Activated CD4-positive, alpha-beta T cell treated with anti-CD3 and anti-CD28 coated beads, Interleukin-2, amount 10 ng/mL, durations not matched to agents 24 days and 14 days (primary cell): ENCODE measurements at regions of chr3 and their contacts with region 1.

Region 1: DNA sequence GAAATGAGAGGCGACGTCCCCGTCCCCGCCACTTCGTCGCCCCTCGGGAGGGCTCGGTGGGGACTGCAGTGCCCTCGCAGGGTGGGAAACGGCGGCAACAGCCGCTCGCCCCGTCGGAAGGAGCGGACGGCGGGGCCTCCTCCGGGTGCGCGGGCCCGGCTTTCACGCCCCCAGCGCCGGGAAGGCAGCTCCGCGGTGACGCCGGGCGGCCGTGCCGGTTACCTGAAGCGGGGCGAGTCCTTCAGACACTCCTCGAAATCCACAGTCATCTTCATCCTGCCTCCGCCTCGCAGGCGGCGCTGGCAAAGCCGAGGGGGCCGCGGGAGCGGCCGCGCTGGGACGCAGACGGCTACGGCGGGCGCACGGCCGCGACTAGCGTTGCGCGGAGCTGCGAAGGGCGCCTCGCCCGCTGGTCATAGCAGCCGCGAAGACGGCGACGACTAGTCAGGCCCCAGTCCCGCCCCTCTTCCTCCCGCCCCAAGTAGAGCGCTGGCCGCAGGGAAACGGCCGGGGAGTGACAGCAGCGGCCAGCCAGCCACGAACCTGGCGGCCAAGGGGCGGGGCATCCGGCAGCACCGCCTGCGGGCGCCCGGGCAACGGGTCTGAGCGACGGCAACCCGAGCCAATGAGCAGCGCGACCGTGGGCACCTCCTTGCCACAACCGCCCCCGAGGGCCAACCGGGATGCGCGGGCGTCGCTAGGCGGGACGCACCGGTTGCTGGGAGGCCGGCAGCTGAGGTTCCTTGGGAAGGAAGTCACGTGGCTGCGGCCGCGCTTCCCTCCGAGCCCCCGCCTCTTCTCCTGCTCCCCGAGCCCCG is at the start of gene ACAP2:
- DNase-seq: peak; percentile 100
- H3K4me3 Mint-ChIP-seq: peak within 1 kb of the TSS; percentile 97
- H3K27ac Mint-ChIP-seq: peak within 1 kb of the TSS; percentile 91
- H3K4me1 Mint-ChIP-seq: peaks cover 39% of the 10 kb centered on the region
- H3K27me3 Mint-ChIP-seq: no peaks in the 10 kb centered on the region
- total RNA-seq, gene ACAP2: 39.1 and 40.0 TPM in 2 replicates

Region 2: DNA sequence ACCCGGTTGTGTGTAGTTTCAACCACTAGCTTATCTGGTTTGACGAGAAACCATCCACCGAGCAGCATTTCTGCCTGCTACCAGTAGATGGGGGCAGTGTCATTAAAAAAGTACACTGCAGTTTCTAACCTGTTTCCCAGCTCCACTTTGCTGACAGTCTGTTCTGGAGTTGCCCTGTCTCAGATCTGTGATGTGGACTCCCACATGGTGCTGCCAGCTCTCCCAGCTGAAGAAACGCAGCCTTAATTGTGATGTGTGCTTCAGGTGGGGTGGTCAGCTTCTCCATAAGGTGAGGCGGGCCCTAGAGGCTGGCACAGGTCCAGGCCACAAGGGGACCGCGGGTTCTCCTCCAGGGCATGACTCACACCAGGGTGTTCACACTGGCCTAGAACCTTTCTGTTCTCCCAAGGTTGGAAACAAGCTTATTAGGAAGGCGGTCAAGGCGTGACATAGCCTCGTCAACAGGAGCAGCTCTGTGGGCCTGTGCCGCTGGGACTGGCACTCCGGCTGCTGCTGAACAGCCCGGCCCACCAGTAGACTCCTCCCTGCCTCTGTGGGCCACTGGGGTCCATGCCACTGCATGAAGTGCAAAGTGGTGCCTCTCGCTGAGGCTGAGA is 760.0 kb before region 1 on chr3:
- intact Hi-C with region 1: loop called (anchors 5 kb)
- DNase-seq: peak; percentile 91
- H3K4me3 Mint-ChIP-seq: no peak overlapping the region
- H3K27ac Mint-ChIP-seq: no peak overlapping the region
- H3K4me1 Mint-ChIP-seq: peaks cover 37% of the 10 kb centered on the region
- H3K27me3 Mint-ChIP-seq: peaks cover 34% of the 10 kb centered on the region

Region 3: DNA sequence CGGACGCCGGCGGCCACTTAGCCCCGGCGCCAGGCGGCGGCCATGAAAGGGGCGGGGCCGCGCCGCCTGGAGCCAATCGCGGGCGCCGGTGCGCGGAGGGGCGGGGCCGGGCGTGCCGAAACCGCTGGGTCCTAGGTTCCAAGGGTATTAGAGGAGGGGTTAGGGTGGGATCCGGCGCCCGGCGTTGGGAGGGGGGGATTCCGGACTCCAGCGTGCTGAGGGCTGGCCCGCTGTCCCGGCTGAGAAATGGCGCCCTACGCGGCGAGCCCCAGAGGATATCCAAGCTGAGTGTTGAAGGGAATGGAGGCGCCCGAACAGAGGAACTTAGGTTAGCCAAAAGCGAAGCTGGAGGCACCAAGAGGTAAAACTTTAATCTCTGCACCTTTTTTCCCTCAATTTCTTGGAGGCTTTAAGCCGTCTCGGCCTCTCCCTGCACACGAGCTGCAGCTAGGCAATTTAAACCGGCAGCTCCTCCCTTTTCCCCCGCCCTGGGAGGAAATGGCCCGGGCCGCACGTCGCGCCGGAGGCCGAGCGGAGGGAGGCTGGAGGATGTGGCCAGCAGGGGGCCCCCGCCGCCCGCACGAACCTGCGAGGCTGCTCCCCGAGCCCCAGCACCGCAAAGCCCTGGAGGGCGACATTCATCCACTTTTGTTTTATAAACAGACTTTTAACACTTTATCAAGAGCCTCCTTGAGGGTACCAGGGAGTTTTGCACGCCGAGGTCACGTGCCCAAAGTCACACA is 171.5 kb before region 1 on chr3 and contains the start of gene XXYLT1:
- intact Hi-C with region 1: loop called (anchors 1 kb)
- DNase-seq: peak; percentile 97
- H3K4me3 Mint-ChIP-seq: peak within 1 kb of the TSS; percentile 88
- H3K27ac Mint-ChIP-seq: peak within 1 kb of the TSS; percentile 90
- H3K4me1 Mint-ChIP-seq: peaks cover 17% of the 10 kb centered on the region
- H3K27me3 Mint-ChIP-seq: no peaks in the 10 kb centered on the region
- total RNA-seq, gene XXYLT1: 14.5 and 17.4 TPM in 2 replicates

Region 4: DNA sequence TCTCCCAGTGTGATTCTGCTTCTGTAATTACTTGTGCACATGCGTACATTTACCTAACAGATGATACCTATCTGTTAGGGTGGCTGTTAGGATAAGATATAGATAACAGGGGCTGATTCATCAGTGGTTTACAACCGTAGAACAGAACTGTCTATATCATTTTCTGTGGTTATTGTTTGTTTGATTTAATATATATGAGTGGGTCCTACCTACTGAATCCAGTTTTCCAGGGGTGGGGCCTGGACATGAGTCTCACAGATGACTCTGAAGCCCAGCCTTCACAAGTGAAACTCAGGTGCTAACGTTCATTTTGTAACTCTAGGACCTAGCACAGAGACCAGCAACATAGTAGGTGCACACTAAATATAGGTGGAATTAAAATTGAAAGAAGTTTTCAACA is 10.5 kb after region 1 on chr3:
- intact Hi-C with region 1: no loop called
- DNase-seq: no peak
- H3K4me3 Mint-ChIP-seq: no peak overlapping the region
- H3K27ac Mint-ChIP-seq: no peak overlapping the region
- H3K4me1 Mint-ChIP-seq: peaks cover 7% of the 10 kb centered on the region
- H3K27me3 Mint-ChIP-seq: peaks cover 7% of the 10 kb centered on the region

Region 5: GRCh38 chr3:195467641-195468390 is 25.0 kb after region 1 on chr3:
- intact Hi-C with region 1: loop called (anchors 1 kb)
- DNase-seq: peak; percentile 65
- H3K4me3 Mint-ChIP-seq: peak overlapping the region; percentile 3
- H3K27ac Mint-ChIP-seq: peak overlapping the region; percentile 62
- H3K4me1 Mint-ChIP-seq: peaks cover 12% of the 10 kb centered on the region
- H3K27me3 Mint-ChIP-seq: no peaks in the 10 kb centered on the region

Region 6: GRCh38 chr3:195542698-195543499 is 100.1 kb after region 1 on chr3 and contains the start of gene PPP1R2:
- intact Hi-C with region 1: loop called (anchors 1 kb)
- DNase-seq: peak; percentile 97
- H3K4me3 Mint-ChIP-seq: peak within 1 kb of the TSS; percentile 89
- H3K27ac Mint-ChIP-seq: peak within 1 kb of the TSS; percentile 87
- H3K4me1 Mint-ChIP-seq: peaks cover 72% of the 10 kb centered on the region
- H3K27me3 Mint-ChIP-seq: no peaks in the 10 kb centered on the region
- total RNA-seq, gene PPP1R2: 75.2 and 78.2 TPM in 2 replicates